Naive thymus-derived CD4-positive, alpha-beta T cell (primary cell): ENCODE measurements at regions of chr20 and their contacts with region 1.

Region 1: DNA sequence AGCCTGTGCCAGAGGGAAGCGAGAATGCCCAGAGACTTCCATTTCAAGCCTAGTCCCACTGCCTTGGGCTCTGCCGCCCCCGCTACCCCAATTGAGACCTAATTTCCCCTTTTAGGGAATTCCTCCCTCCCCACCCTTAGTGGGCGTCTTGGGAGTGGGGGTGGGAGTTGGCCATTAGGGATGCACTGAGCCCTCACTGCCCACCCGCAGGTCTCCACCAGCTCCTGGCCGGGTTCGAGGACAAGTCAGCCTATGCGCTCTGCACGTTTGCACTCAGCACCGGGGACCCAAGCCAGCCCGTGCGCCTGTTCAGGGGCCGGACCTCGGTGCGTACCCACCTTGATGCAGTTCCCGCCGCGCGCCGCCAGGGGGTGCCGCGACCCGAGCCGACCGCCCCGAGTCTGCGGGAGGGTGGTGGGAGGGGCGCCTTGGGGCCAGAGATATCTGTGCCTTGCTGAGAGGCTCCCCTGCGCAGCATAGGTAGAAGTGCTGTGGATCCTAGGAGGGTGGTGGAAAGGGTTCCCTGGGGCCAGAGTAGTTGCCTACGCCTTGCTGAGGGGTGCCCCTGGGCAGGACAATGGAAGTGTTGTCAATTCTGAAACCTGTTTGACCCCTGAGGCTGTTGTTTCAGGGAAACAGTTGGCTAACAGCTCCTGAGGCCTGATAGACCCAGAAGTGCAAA is 9.2 kb downstream of the ITPA start:
- DNase-seq: peak; percentile 59 to 82 (median 69)
- ATAC-seq: peak; percentile 89
- H3K4me3 ChIP-seq: no peak overlapping the region
- H3K4me3 Mint-ChIP-seq: peak overlapping the region in 1 of 10 donors; percentile 38
- H3K27ac ChIP-seq: no peak overlapping the region
- H3K27ac Mint-ChIP-seq: peak overlapping the region in 1 of 9 donors; percentile 65
- H3K4me1 ChIP-seq: peaks cover 0 to 15% of the 10 kb centered on the region in 2 donors
- H3K4me1 Mint-ChIP-seq: peaks cover 2 to 21% (median 16%) of the 10 kb centered on the region in 7 donors
- H3K27me3 ChIP-seq: no peaks in the 10 kb centered on the region
- H3K27me3 Mint-ChIP-seq: no peaks in the 10 kb centered on the region

Region 2: DNA sequence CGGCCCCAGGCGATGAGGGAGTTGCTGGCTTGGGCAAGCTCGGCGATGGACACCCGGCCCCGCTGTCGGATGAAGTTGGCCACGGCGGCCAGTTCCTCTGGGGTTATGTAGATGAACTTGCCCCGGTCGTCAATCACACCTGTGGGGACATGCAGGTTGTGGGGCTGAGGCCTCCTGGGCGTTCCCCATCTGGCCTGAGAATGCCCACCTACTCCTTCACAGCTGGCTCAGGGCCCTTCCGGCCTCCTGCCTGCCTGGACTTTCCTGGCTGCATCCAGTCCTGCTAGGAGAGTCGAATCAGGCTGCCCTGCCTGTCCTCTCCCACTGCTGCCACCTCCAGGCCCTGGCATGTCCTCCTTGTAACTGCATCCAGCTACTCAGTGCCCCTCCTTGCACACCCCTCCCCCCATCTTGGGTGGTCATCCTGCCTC is 27.8 kb before region 1 on chr20:
- CTCF ChIA-PET with region 1: no interaction called
- POLR2A ChIA-PET with region 1: no interaction called
- intact Hi-C with region 1: no loop called
- DNase-seq: no peak
- ATAC-seq: no peak
- H3K4me3 ChIP-seq: no peak overlapping the region
- H3K4me3 Mint-ChIP-seq: no peak overlapping the region
- H3K27ac ChIP-seq: no peak overlapping the region
- H3K27ac Mint-ChIP-seq: peak overlapping the region in 1 of 9 donors; percentile 69
- H3K4me1 ChIP-seq: no peaks in the 10 kb centered on the region
- H3K4me1 Mint-ChIP-seq: peaks cover 0 to 11% (median 6%) of the 10 kb centered on the region in 7 donors
- H3K27me3 ChIP-seq: no peaks in the 10 kb centered on the region
- H3K27me3 Mint-ChIP-seq: no peaks in the 10 kb centered on the region

Region 3: GRCh38 chr20:3239026-3239866 is 20.8 kb after region 1 on chr20 and contains the start of gene SLC4A11:
- CTCF ChIA-PET with region 1: interaction called, 5 read pairs
- POLR2A ChIA-PET with region 1: interaction called, 4 read pairs
- intact Hi-C with region 1: loop called in 1 of 2 experiments (anchors 2 kb)
- DNase-seq: peak in 3 of 9 donors; percentile 22 to 57 (median 34)
- ATAC-seq: peak; percentile 64
- H3K4me3 ChIP-seq: peak within 1 kb of the TSS; percentile 59
- H3K4me3 Mint-ChIP-seq: peak within 1 kb of the TSS; percentile 83 to 97 (median 92)
- H3K27ac ChIP-seq: no peak within 1 kb of the TSS
- H3K27ac Mint-ChIP-seq: peak within 1 kb of the TSS in 5 of 9 donors; percentile 28 to 77 (median 46)
- H3K4me1 ChIP-seq: peaks cover 0 to 16% of the 10 kb centered on the region in 2 donors
- H3K4me1 Mint-ChIP-seq: peaks cover 6 to 16% (median 8%) of the 10 kb centered on the region in 7 donors
- H3K27me3 ChIP-seq: peaks cover 0 to 27% of the 10 kb centered on the region in 2 donors
- H3K27me3 Mint-ChIP-seq: peaks cover 37 to 66% (median 49%) of the 10 kb centered on the region in 5 donors
- total RNA-seq, gene SLC4A11: 0.19 to 1.5 (median 0.93) TPM in 4 of 5 experiments, not detected in the other

Region 4: DNA sequence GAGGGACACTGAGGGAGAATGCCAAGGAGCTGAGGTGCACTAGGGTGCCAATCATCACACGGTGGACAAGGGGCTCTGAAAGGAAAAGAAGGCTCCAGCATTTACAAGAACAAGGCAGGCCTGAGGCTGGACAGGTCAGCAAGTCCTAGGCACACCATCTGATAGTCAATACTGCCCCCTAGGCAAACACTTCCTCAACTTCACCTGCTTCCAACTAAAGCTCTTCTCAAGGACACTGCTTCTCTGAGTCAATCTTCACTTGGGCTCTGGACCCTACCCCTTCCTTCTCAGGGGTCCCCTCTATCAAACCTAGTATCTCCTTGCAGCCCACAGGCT is 58.2 kb after region 1 on chr20:
- CTCF ChIA-PET with region 1: no interaction called
- POLR2A ChIA-PET with region 1: interaction called, 3 read pairs
- intact Hi-C with region 1: loop called in 1 of 2 experiments (anchors 1 kb)
- DNase-seq: no peak
- ATAC-seq: no peak
- H3K4me3 ChIP-seq: no peak overlapping the region
- H3K4me3 Mint-ChIP-seq: no peak overlapping the region
- H3K27ac ChIP-seq: no peak overlapping the region
- H3K27ac Mint-ChIP-seq: no peak overlapping the region
- H3K4me1 ChIP-seq: no peaks in the 10 kb centered on the region
- H3K4me1 Mint-ChIP-seq: no peaks in the 10 kb centered on the region
- H3K27me3 ChIP-seq: no peaks in the 10 kb centered on the region
- H3K27me3 Mint-ChIP-seq: no peaks in the 10 kb centered on the region

Region 5: DNA sequence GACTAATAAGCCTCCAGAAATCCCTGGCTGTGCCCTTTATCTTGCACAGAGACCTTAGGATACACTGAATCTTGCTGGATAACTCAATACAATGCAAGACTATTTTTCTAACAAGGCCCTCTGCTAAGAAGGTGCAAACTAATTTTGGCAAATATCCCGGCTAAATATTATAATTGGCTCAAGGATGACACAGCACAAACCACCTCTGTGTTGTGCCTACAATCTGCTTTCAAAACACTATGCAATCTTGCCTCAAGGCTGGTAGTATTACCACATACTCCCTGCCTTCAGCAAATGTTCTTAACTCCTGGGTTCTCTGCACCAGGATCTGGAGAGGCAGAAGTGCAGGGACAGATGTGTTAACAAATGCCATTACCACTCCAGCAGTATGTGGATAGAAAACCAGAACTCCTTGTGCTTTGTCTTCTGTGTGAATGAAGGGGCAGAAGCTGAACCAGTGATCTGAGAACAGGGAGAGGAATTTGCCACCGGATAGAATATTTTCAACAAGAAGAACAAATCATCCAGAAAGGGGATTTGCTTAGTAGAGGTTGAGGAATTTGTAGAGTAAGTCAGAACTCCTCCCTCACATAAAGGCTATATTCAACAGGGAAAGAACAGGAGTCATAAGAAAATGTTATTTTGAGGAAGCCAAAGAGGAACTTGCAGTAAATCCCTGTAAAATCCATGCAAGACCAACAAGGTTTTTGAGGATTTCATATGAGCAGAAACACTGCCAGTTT is 94.7 kb after region 1 on chr20:
- CTCF ChIA-PET with region 1: interaction called, 7 read pairs
- POLR2A ChIA-PET with region 1: interaction called, 5 read pairs
- intact Hi-C with region 1: loop called (anchors 1 kb)
- DNase-seq: no peak
- ATAC-seq: no peak
- H3K4me3 ChIP-seq: no peak overlapping the region
- H3K4me3 Mint-ChIP-seq: no peak overlapping the region
- H3K27ac ChIP-seq: no peak overlapping the region
- H3K27ac Mint-ChIP-seq: peak overlapping the region in 4 of 9 donors; percentile 20 to 67 (median 39)
- H3K4me1 ChIP-seq: no peaks in the 10 kb centered on the region
- H3K4me1 Mint-ChIP-seq: peaks cover 0 to 4% (median 0%) of the 10 kb centered on the region in 7 donors
- H3K27me3 ChIP-seq: no peaks in the 10 kb centered on the region
- H3K27me3 Mint-ChIP-seq: no peaks in the 10 kb centered on the region

Region 6: GRCh38 chr20:3452690-3453089 is 234.2 kb after region 1 on chr20:
- CTCF ChIA-PET with region 1: no interaction called
- POLR2A ChIA-PET with region 1: no interaction called
- intact Hi-C with region 1: no loop called
- DNase-seq: no peak
- ATAC-seq: no peak
- H3K4me3 ChIP-seq: no peak overlapping the region
- H3K4me3 Mint-ChIP-seq: no peak overlapping the region
- H3K27ac ChIP-seq: no peak overlapping the region
- H3K27ac Mint-ChIP-seq: no peak overlapping the region
- H3K4me1 ChIP-seq: no peaks in the 10 kb centered on the region
- H3K4me1 Mint-ChIP-seq: no peaks in the 10 kb centered on the region
- H3K27me3 ChIP-seq: no peaks in the 10 kb centered on the region
- H3K27me3 Mint-ChIP-seq: peaks cover 0 to 38% (median 0%) of the 10 kb centered on the region in 5 donors

Region 7: GRCh38 chr20:3470627-3471396 is 252.4 kb after region 1 on chr20 and contains the start of gene ATRN:
- CTCF ChIA-PET with region 1: no interaction called
- POLR2A ChIA-PET with region 1: no interaction called
- intact Hi-C with region 1: loop called in 1 of 2 experiments (anchors 5 kb)
- DNase-seq: peak; percentile 72 to 96 (median 80)
- ATAC-seq: peak; percentile 98
- H3K4me3 ChIP-seq: peak within 1 kb of the TSS; percentile 89
- H3K4me3 Mint-ChIP-seq: peak within 1 kb of the TSS; percentile 89 to 97 (median 96)
- H3K27ac ChIP-seq: peak within 1 kb of the TSS; percentile 79
- H3K27ac Mint-ChIP-seq: peak within 1 kb of the TSS; percentile 69 to 96 (median 86)
- H3K4me1 ChIP-seq: peaks cover 21 to 26% of the 10 kb centered on the region in 2 donors
- H3K4me1 Mint-ChIP-seq: peaks cover 26 to 43% (median 34%) of the 10 kb centered on the region in 7 donors
- H3K27me3 ChIP-seq: no peaks in the 10 kb centered on the region
- H3K27me3 Mint-ChIP-seq: peaks cover 0 to 15% (median 0%) of the 10 kb centered on the region in 5 donors
- total RNA-seq, gene ATRN: 12.4 to 17.5 (median 13.0) TPM